ENCODE measurements at regions of chr11 and their contacts with region 1.

Region 1: GRCh38 chr11:6568191-6568918 is 35.1 kb downstream of the RRP8 start:
- DNase-seq: peak; percentile 83 to 94 (median 89)
- ATAC-seq: peak; percentile 88
- H3K4me3 ChIP-seq: no peak overlapping the region
- H3K27ac ChIP-seq: peak overlapping the region; percentile 61
- H3K4me1 ChIP-seq: peaks cover 41 to 54% of the 10 kb centered on the region in 2 experiments
- H3K27me3 ChIP-seq: no peaks in the 10 kb centered on the region
- CTCF ChIP-seq: peak; percentile 21 to 50 (median 36); a peak in 5 of 6 replicates
- EP300 ChIP-seq: peak; percentile 64; the same call in 1 of the 2 replicates
- POLR2A ChIP-seq: no peak
- RAD21 ChIP-seq: no peak

Region 2: GRCh38 chr11:6362873-6363678 is 205.3 kb before region 1 on chr11:
- CTCF ChIA-PET with region 1: no interaction called
- POLR2A ChIA-PET with region 1: no interaction called
- in situ Hi-C with region 1: no loop called
- intact Hi-C with region 1: no loop called
- DNase-seq: peak; percentile 52 to 78 (median 62)
- ATAC-seq: peak; percentile 98
- H3K4me3 ChIP-seq: no peak overlapping the region
- H3K27ac ChIP-seq: no peak overlapping the region
- H3K4me1 ChIP-seq: no peaks in the 10 kb centered on the region
- H3K27me3 ChIP-seq: peaks cover 8 to 9% of the 10 kb centered on the region in 2 experiments; a peak in 2 of 5 replicates
- CTCF ChIP-seq: peak; percentile 85 to 87 (median 86)
- EP300 ChIP-seq: no peak
- POLR2A ChIP-seq: no peak
- RAD21 ChIP-seq: peak; percentile 61 to 74

Region 3: DNA sequence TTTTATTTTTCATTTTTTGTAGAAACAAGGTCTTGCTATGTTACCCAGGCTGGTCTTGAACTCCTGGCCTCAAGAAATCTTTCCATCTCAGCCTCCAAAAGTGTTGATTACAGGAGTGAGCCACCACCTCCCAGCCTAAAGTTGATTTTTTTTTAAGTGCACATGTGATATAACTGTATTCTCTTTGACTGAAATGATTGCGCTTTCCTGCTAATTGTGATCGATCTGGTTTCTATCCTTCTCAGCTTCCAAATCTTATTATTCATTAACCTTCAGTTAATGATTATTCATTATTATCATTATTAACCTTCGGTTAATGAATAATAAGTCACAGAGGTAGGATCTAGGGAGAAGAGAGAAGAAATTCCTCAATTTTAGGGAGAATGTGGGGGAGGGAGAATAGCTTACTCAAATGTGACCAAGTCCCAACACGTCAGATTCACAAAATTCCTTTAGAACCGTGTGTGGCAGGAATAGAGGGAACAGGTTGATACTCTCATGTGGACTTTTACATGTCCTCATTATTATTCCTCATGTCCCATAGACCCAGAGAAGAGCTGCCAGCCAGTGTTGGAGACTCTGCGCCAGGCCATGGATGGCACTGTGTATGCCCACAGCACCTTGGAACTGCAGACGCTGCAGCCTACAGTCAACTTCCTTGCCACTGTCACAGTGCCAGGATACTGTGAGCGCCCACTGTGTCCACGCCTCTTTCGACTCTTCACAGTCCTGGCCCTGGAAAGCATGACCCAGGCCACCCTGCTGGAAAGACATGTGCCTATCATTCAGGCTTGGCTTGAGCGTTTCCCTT is 12.0 kb before region 1 on chr11:
- CTCF ChIA-PET with region 1: no interaction called
- POLR2A ChIA-PET with region 1: interaction called, 19 read pairs
- in situ Hi-C with region 1: no loop called
- intact Hi-C with region 1: no loop called
- DNase-seq: no peak
- ATAC-seq: no peak
- H3K4me3 ChIP-seq: no peak overlapping the region
- H3K27ac ChIP-seq: peak overlapping the region; percentile 58
- H3K4me1 ChIP-seq: peaks cover 23% of the 10 kb centered on the region in 2 experiments
- H3K27me3 ChIP-seq: no peaks in the 10 kb centered on the region
- CTCF ChIP-seq: no peak
- EP300 ChIP-seq: no peak
- POLR2A ChIP-seq: no peak
- RAD21 ChIP-seq: no peak